ENCODE measurements at regions of chr5 and their contacts with region 1.

Region 1: GRCh38 chr5:56814963-56815658 is at the start of gene MAP3K1:
- DNase-seq: peak; percentile 75
- H3K4me3 Mint-ChIP-seq: peak within 1 kb of the TSS; percentile 87
- H3K27ac Mint-ChIP-seq: peak within 1 kb of the TSS; percentile 88
- H3K4me1 Mint-ChIP-seq: peaks cover 43% of the 10 kb centered on the region
- H3K27me3 Mint-ChIP-seq: peaks cover 6% of the 10 kb centered on the region
- total RNA-seq, gene MAP3K1: 19.9 and 20.7 TPM in 2 replicates

Region 2: DNA sequence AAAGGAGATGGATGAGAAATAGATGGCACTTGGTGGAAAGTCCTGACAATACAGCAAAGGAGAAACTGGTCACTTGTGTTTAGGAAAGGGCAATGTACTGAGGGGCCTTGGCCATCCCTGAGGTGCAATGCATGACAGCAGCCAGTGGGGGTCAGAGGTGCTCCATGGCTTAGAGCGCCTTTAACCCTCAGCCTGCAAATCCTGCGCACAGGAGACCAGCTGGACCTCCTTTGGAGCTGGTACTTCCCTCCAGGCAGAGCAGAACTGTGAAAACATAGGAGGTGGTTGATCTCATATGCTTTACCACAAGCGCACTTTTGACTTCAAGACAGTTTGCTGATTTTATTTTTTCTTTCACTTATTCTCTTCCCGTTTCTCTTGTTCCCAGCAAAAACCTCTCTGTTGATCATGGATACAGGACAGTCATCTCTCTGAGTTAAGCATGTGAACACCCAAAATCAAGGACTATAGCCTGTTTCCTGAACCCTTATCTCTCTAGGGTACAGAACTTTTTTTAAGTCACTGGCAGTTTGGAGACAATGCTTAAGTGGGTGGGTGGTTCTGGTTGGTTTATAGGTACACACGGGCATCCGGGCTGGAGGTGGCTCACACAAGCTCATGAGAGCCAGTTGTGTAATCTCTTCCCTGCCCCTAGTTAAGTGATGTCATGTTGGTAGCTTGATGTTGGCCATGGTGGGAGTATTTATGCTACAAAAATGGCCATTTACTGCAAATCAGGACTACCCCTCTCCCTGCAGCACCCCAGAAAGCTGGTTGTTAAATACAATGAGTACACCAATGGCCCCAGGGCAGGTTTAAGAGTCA is 544.3 kb before region 1 on chr5:
- intact Hi-C with region 1: loop called (anchors 2 kb)
- DNase-seq: peak; percentile 64
- H3K4me3 Mint-ChIP-seq: peak overlapping the region; percentile 0
- H3K27ac Mint-ChIP-seq: no peak overlapping the region
- H3K4me1 Mint-ChIP-seq: peaks cover 20% of the 10 kb centered on the region
- H3K27me3 Mint-ChIP-seq: no peaks in the 10 kb centered on the region

Region 3: DNA sequence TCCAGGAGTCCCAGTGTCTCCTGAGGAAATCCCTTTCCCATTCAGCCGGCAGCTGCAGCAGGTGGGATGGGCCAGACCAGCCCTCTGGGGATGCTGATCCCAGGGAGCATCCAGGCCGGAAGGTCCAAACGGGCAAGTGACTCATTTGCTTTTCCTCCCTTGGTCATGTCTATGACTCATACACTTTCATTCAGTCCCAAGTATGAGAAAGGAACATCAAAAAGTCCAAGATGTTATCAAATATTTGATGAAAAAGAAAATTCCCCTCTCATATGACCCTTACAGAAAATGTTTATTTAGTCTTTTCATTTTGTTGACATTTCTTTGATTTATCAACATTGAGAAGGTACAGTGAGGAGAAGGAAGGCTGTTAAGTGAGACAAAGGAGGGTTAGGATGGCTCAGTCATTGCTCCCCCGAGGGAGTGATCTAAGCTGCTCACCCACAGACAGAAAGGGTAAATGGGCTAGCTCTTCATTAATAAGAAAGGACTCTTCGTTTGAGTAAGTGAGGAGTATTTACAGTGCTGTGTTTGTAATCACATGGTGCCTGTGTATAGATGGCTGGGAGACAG is 464.4 kb before region 1 on chr5:
- intact Hi-C with region 1: no loop called
- DNase-seq: no peak
- H3K4me3 Mint-ChIP-seq: no peak overlapping the region
- H3K27ac Mint-ChIP-seq: no peak overlapping the region
- H3K4me1 Mint-ChIP-seq: peaks cover 25% of the 10 kb centered on the region
- H3K27me3 Mint-ChIP-seq: no peaks in the 10 kb centered on the region

Region 4: GRCh38 chr5:56610093-56610698 is 204.9 kb before region 1 on chr5:
- intact Hi-C with region 1: loop called (anchors 5 kb)
- DNase-seq: peak; percentile 43
- H3K4me3 Mint-ChIP-seq: peak overlapping the region; percentile 41
- H3K27ac Mint-ChIP-seq: peak overlapping the region; percentile 35
- H3K4me1 Mint-ChIP-seq: peaks cover 83% of the 10 kb centered on the region
- H3K27me3 Mint-ChIP-seq: no peaks in the 10 kb centered on the region

Region 5: GRCh38 chr5:56692359-56693219 is 122.5 kb before region 1 on chr5:
- intact Hi-C with region 1: loop called (anchors 5 kb)
- DNase-seq: no peak
- H3K4me3 Mint-ChIP-seq: peak overlapping the region; percentile 28
- H3K27ac Mint-ChIP-seq: peak overlapping the region; percentile 30
- H3K4me1 Mint-ChIP-seq: peaks cover 62% of the 10 kb centered on the region
- H3K27me3 Mint-ChIP-seq: no peaks in the 10 kb centered on the region

Region 6: DNA sequence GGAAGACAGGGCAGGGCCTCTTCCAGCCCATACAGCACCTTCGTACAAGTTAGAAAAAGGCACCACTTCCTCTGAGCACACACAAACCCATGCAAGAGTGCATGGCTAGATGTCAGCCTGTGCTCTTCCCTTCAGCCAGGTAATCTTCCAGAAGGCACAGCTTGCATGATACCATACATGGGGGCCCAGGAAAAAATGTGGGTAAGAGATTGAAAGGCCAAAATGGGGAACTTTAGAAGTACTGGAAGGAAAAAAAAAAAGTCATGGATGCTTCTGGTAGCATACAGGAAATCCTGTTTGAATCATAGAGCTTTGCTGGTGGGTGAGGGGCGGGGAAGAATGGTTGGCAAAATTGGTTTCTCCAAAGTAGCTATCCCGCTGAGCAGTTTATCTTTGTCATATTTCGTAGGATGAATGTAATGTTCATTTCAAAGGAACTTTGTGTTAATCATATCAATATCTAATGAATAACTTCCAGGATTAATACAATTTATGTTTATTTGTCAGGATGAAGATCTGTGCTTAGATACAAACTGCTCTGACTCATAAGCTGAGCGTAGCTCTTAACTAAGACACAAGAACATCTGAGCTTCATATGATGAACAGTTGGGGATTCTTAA is 78.0 kb before region 1 on chr5:
- intact Hi-C with region 1: loop called (anchors 5 kb)
- DNase-seq: no peak
- H3K4me3 Mint-ChIP-seq: no peak overlapping the region
- H3K27ac Mint-ChIP-seq: peak overlapping the region; percentile 38
- H3K4me1 Mint-ChIP-seq: peaks cover 30% of the 10 kb centered on the region
- H3K27me3 Mint-ChIP-seq: no peaks in the 10 kb centered on the region

Region 7: DNA sequence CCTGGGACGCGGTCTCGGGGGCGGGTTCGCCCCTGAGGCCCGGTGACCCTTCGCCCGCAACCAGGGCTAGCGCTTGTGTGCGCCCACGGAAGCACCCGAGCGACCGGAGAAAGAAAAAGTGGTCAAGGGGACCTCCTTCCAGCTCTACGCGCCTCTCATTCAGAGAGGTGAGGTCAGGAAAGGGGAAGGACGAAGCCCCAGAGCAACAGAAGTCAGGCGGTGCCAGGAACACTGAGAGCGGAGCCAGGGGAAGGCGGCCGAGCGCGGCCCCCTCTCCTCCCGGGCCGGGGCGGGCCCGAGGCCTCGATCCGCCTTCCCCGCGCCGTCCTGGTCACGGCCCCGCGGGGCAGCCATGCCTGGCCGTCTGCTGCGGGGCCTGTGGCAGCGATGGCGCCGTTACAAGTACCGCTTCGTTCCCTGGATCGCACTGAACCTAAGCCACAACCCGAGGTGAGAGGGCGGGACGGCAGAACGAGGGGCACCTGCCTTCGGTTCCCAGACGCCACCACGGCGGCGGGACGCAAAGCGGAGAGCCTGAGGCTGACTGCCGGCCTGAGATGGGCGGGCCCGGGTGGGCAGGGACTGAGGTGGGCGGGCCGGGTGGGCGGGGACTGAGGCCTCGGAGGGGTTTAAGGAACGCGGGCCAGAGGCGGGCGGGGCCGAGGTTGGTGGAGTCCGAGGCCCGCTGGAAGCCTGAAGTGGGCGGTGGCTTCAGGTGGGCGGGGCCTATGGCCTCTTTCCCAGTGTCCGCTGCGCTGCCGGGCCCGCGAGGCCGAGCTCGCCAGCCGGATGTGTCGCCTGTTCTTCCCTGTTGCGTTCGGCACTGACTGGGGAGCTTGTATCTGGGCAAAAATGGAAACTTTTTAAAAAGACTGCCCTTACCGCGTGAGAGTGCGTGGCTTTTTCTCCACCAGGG is 94.4 kb after region 1 on chr5 and contains the start of gene SETD9:
- intact Hi-C with region 1: loop called (anchors 2 kb)
- DNase-seq: peak; percentile 91
- H3K4me3 Mint-ChIP-seq: peak within 1 kb of the TSS; percentile 86
- H3K27ac Mint-ChIP-seq: peak within 1 kb of the TSS; percentile 96
- H3K4me1 Mint-ChIP-seq: peaks cover 22% of the 10 kb centered on the region
- H3K27me3 Mint-ChIP-seq: peaks cover 10% of the 10 kb centered on the region
- total RNA-seq, gene SETD9: 11.0 and 13.1 TPM in 2 replicates